ENCODE measurements at regions of chr20 and their contacts with region 1.

Region 1: GRCh38 chr20:8722276-8722928 is 346.5 kb upstream of the PLCB4 start:
- DNase-seq: no peak
- H3K4me3 ChIP-seq: no peak overlapping the region
- H3K27ac ChIP-seq: no peak overlapping the region
- H3K4me1 ChIP-seq: no peaks in the 10 kb centered on the region
- H3K27me3 ChIP-seq: no peaks in the 10 kb centered on the region
- CTCF ChIP-seq: peak; percentile 14 to 78 (median 75)
- EP300 ChIP-seq: no peak
- POLR2A ChIP-seq: no peak
- RAD21 ChIP-seq: peak; percentile 93 to 95

Region 2: GRCh38 chr20:8043687-8044282 is 678.6 kb before region 1 on chr20:
- CTCF ChIA-PET with region 1: interaction called, 51 read pairs
- POLR2A ChIA-PET with region 1: no interaction called
- DNase-seq: no peak
- H3K4me3 ChIP-seq: no peak overlapping the region
- H3K27ac ChIP-seq: no peak overlapping the region
- H3K4me1 ChIP-seq: no peaks in the 10 kb centered on the region
- H3K27me3 ChIP-seq: no peaks in the 10 kb centered on the region
- CTCF ChIP-seq: peak in 2 of 3 experiments; percentile 53 to 55; a peak in 3 of 4 replicates
- EP300 ChIP-seq: no peak
- POLR2A ChIP-seq: no peak
- RAD21 ChIP-seq: peak; percentile 70 to 71

Region 3: GRCh38 chr20:8389381-8390036 is 332.9 kb before region 1 on chr20:
- CTCF ChIA-PET with region 1: interaction called, 36 read pairs
- POLR2A ChIA-PET with region 1: no interaction called
- DNase-seq: no peak
- H3K4me3 ChIP-seq: no peak overlapping the region
- H3K27ac ChIP-seq: no peak overlapping the region
- H3K4me1 ChIP-seq: peaks cover 0 to 6% (median 2%) of the 10 kb centered on the region in 4 experiments; a peak in 4 of 7 replicates
- H3K27me3 ChIP-seq: no peaks in the 10 kb centered on the region
- CTCF ChIP-seq: peak in 2 of 3 experiments; percentile 16 to 38; a peak in 2 of 4 replicates
- EP300 ChIP-seq: no peak
- POLR2A ChIP-seq: no peak
- RAD21 ChIP-seq: peak in 1 of 2 experiments; percentile 26

Region 4: DNA sequence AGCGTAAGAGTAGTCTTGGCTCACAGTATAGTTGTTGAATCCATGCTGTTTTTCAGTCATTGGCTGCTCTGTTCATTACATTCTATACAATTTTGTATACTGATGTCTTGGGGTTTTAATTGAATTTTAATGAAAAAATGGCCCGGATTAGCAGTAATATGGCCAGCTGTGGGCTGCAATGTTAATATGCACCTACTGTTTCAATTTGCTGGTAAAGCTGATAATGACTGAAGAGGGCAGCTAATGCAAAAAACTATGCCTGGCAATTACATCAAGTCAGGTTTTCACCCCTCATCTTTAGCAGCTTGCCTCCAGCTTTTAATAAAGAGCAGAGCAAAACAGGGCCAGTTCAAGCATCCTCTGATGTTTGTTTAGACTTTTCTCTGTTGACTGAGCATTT is 195.8 kb before region 1 on chr20:
- CTCF ChIA-PET with region 1: interaction called, 13 read pairs
- POLR2A ChIA-PET with region 1: no interaction called
- DNase-seq: no peak
- H3K4me3 ChIP-seq: no peak overlapping the region
- H3K27ac ChIP-seq: no peak overlapping the region
- H3K4me1 ChIP-seq: peaks cover 0 to 6% (median 2%) of the 10 kb centered on the region in 4 experiments; a peak in 2 of 7 replicates
- H3K27me3 ChIP-seq: no peaks in the 10 kb centered on the region
- CTCF ChIP-seq: no peak
- EP300 ChIP-seq: no peak
- POLR2A ChIP-seq: no peak
- RAD21 ChIP-seq: no peak

Region 5: DNA sequence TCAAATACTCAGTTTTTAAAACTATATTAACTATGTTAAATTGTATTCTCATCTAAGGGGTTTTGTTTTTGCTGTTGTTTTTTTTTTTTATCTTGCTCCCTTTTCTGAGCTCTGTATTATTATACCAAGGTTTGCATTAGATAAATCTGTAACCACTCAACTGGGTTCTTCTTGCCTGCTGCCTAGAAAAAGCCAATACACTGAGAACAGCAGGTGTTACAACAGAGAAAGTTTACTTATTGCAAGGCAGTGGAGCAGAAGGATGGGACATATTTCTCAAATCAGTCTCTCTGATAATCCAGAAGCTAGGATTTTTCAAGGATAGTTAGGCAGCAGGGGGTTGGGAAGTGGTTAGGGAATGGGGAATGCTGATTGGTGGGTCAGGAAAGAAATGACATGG is 32.3 kb before region 1 on chr20:
- CTCF ChIA-PET with region 1: no interaction called
- POLR2A ChIA-PET with region 1: no interaction called
- DNase-seq: no peak
- H3K4me3 ChIP-seq: no peak overlapping the region
- H3K27ac ChIP-seq: no peak overlapping the region
- H3K4me1 ChIP-seq: no peaks in the 10 kb centered on the region
- H3K27me3 ChIP-seq: no peaks in the 10 kb centered on the region
- CTCF ChIP-seq: no peak
- EP300 ChIP-seq: no peak
- POLR2A ChIP-seq: no peak
- RAD21 ChIP-seq: no peak

Region 6: GRCh38 chr20:8709627-8710026 is 12.8 kb before region 1 on chr20:
- CTCF ChIA-PET with region 1: interaction called, 15 read pairs
- POLR2A ChIA-PET with region 1: no interaction called
- DNase-seq: no peak
- H3K4me3 ChIP-seq: no peak overlapping the region
- H3K27ac ChIP-seq: no peak overlapping the region
- H3K4me1 ChIP-seq: peaks cover 0 to 2% (median under 1%) of the 10 kb centered on the region in 4 experiments; a peak in 2 of 7 replicates
- H3K27me3 ChIP-seq: no peaks in the 10 kb centered on the region
- CTCF ChIP-seq: no peak
- EP300 ChIP-seq: no peak
- POLR2A ChIP-seq: no peak
- RAD21 ChIP-seq: no peak

Region 7: DNA sequence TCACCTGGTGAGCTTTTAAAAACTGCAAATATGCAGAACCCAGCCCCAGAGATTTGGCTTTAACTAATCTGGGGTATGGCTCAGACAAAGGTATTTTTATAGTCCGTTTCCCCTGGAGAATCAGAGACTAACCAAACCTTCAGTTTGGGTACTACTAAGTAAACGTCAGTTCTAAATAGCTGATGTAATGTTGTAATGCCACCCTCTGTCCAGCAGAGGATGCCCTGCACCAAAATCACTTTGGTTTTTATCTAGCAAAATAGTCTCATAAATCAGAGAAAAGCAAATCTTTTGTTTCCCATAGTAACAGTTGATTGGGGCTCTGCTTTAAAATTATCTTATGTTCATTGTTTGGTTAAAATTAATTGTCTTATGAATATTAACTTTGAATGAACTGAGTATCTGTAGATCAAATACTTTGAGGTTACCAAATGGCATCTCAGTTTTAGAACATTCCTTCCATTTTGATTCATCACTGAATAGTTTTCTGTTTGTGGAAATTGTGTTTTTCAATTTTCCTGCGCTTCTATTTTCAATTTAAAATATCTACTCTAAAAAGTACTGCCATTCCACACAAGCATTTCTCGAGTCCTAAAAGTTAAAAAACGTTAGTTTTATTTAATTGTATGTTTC is 68.2 kb after region 1 on chr20:
- CTCF ChIA-PET with region 1: no interaction called
- POLR2A ChIA-PET with region 1: no interaction called
- DNase-seq: no peak
- H3K4me3 ChIP-seq: no peak overlapping the region
- H3K27ac ChIP-seq: no peak overlapping the region
- H3K4me1 ChIP-seq: no peaks in the 10 kb centered on the region; a peak in 1 of 7 replicates
- H3K27me3 ChIP-seq: no peaks in the 10 kb centered on the region
- CTCF ChIP-seq: peak in 2 of 3 experiments; percentile 68 to 85; a peak in 3 of 4 replicates
- EP300 ChIP-seq: no peak
- POLR2A ChIP-seq: no peak
- RAD21 ChIP-seq: peak; percentile 87 to 90

Region 8: DNA sequence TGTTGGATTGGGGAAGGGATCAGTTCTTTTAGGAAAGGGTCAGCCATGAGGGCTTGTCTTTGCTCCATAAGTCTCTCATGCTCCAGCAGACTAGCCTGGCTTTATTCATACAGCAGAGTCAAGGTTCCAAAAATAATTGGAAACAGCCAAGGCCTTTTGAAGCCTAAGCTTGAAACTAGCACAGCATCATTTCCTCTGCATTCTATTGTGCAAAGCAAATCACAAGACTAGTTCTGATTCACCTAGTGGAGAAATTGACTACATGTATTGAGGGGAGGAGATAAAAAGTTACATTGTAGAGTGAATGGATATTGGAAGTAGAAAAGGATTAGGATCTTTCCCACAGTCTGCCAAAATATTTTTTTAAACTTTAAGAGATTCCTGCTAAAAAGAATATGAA is 187.2 kb after region 1 on chr20:
- CTCF ChIA-PET with region 1: no interaction called
- POLR2A ChIA-PET with region 1: no interaction called
- DNase-seq: no peak
- H3K4me3 ChIP-seq: no peak overlapping the region
- H3K27ac ChIP-seq: no peak overlapping the region
- H3K4me1 ChIP-seq: no peaks in the 10 kb centered on the region; a peak in 1 of 7 replicates
- H3K27me3 ChIP-seq: no peaks in the 10 kb centered on the region
- CTCF ChIP-seq: no peak
- EP300 ChIP-seq: no peak
- POLR2A ChIP-seq: no peak
- RAD21 ChIP-seq: no peak